ENCODE measurements at regions of chr4 and their contacts with region 1.

Region 1: GRCh38 chr4:86934771-86935565 is at the start of gene AFF1:
- DNase-seq: peak; percentile 71
- ATAC-seq: peak; percentile 72
- H3K4me3 ChIP-seq: peak within 1 kb of the TSS; percentile 91
- H3K27ac ChIP-seq: peak within 1 kb of the TSS; percentile 93
- H3K4me1 ChIP-seq: peaks cover 3% of the 10 kb centered on the region; the same call in 1 of the 2 replicates
- H3K27me3 ChIP-seq: no peaks in the 10 kb centered on the region
- CTCF ChIP-seq: peak in 2 of 3 experiments; percentile 30 to 32; a peak in 4 of 6 replicates
- EP300 ChIP-seq: no peak
- POLR2A ChIP-seq: peak; percentile 96
- RAD21 ChIP-seq: peak; percentile 17; the same call in 1 of the 2 replicates
- polyA plus RNA-seq, gene AFF1: 3.5 to 11.4 TPM

Region 2: GRCh38 chr4:86977621-86978184 is 42.7 kb after region 1 on chr4:
- CTCF ChIA-PET with region 1: interaction called, 20 read pairs
- POLR2A ChIA-PET with region 1: interaction called, 18 read pairs
- RAD21 ChIA-PET with region 1: interaction called, 23 read pairs
- SMC1A ChIA-PET with region 1: interaction called, 35 read pairs
- in situ Hi-C with region 1: no loop called
- intact Hi-C with region 1: loop called (anchors 5 kb)
- DNase-seq: peak; percentile 67
- ATAC-seq: peak; percentile 96
- H3K4me3 ChIP-seq: peak overlapping the region; percentile 31; the same call in 1 of the 2 replicates
- H3K27ac ChIP-seq: peak overlapping the region; percentile 55
- H3K4me1 ChIP-seq: peaks cover 41% of the 10 kb centered on the region
- H3K27me3 ChIP-seq: no peaks in the 10 kb centered on the region
- CTCF ChIP-seq: no peak
- EP300 ChIP-seq: peak in 1 of 2 experiments; percentile 74; a peak in 1 of 4 replicates
- POLR2A ChIP-seq: no peak
- RAD21 ChIP-seq: no peak

Region 3: DNA sequence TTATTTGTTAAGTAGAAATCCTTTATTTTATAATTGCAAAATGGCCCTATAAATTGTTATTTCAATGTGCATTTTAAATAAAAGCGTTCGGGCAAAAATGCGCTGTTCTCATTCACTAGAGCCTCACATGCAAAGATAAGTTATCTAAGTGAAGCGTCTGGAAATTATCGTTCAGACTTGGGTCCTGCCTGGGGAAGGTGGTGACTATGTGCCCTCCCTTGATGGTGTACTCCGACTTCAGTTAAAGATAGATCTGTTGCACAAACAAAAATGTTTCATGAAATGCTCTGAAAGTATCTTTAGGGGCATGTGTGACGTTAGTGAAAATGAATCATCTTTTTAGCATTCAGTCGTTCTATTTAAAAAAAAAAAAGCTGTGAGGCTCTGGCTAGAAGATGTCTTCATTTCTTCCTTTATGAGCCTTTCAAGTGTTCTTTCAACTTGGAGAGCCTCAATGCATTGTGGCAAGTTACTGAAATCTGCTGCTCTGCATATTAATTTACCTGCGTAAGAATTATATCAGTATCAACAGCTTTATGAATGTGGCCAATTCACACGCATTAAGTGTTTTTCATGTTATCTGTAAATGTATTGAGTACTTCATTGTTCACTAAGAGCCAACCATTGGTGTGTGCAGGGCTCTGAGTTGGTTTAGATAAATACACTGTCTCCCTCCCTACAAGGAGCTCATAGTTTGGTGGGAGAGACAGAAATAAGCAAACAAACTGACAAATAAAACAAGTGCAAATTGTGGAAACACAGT is 82.8 kb after region 1 on chr4:
- CTCF ChIA-PET with region 1: interaction called, 4 read pairs
- POLR2A ChIA-PET with region 1: interaction called, 32 read pairs
- RAD21 ChIA-PET with region 1: interaction called, 267 read pairs
- SMC1A ChIA-PET with region 1: interaction called, 268 read pairs
- in situ Hi-C with region 1: no loop called
- intact Hi-C with region 1: no loop called
- DNase-seq: no peak
- ATAC-seq: no peak
- H3K4me3 ChIP-seq: no peak overlapping the region
- H3K27ac ChIP-seq: peak overlapping the region; percentile 78; the same call in 1 of the 2 replicates
- H3K4me1 ChIP-seq: peaks cover 46% of the 10 kb centered on the region
- H3K27me3 ChIP-seq: no peaks in the 10 kb centered on the region
- CTCF ChIP-seq: no peak
- EP300 ChIP-seq: no peak
- POLR2A ChIP-seq: no peak
- RAD21 ChIP-seq: no peak

Region 4: GRCh38 chr4:87058356-87059073 is 123.5 kb after region 1 on chr4:
- CTCF ChIA-PET with region 1: interaction called, 5 read pairs
- POLR2A ChIA-PET with region 1: interaction called, 4 read pairs
- RAD21 ChIA-PET with region 1: interaction called, 13 read pairs
- SMC1A ChIA-PET with region 1: interaction called, 5 read pairs
- in situ Hi-C with region 1: no loop called
- intact Hi-C with region 1: no loop called
- DNase-seq: no peak
- ATAC-seq: peak; percentile 56
- H3K4me3 ChIP-seq: no peak overlapping the region
- H3K27ac ChIP-seq: peak overlapping the region; percentile 4; the same call in 1 of the 2 replicates
- H3K4me1 ChIP-seq: peaks cover 37% of the 10 kb centered on the region
- H3K27me3 ChIP-seq: no peaks in the 10 kb centered on the region
- CTCF ChIP-seq: no peak; a peak in 1 of 6 replicates
- EP300 ChIP-seq: no peak
- POLR2A ChIP-seq: no peak
- RAD21 ChIP-seq: peak; percentile 43; the same call in 1 of the 2 replicates

Region 5: GRCh38 chr4:88378691-88379559 is 1444.0 kb after region 1 on chr4 and contains the start of gene HERC6:
- CTCF ChIA-PET with region 1: no interaction called
- POLR2A ChIA-PET with region 1: no interaction called
- RAD21 ChIA-PET with region 1: no interaction called
- SMC1A ChIA-PET with region 1: no interaction called
- in situ Hi-C with region 1: no loop called
- intact Hi-C with region 1: loop called (anchors 5 kb)
- DNase-seq: peak; percentile 84
- ATAC-seq: peak; percentile 85
- H3K4me3 ChIP-seq: peak within 1 kb of the TSS; percentile 75
- H3K27ac ChIP-seq: peak within 1 kb of the TSS; percentile 82
- H3K4me1 ChIP-seq: peaks cover 24% of the 10 kb centered on the region
- H3K27me3 ChIP-seq: no peaks in the 10 kb centered on the region
- CTCF ChIP-seq: peak; percentile 69 to 83 (median 70)
- EP300 ChIP-seq: 0 out of 4 replicates have a peak, but pooled peaks of 1 of the 2 experiments have one; percentile 56
- POLR2A ChIP-seq: peak; percentile 78
- RAD21 ChIP-seq: peak; percentile 57
- polyA plus RNA-seq, gene HERC6: 1.7 to 2.2 TPM

Measured in GM12878 (cell line).